Caco-2 (cell line): ENCODE measurements at regions of chr10 and their contacts with region 1.

Region 1: DNA sequence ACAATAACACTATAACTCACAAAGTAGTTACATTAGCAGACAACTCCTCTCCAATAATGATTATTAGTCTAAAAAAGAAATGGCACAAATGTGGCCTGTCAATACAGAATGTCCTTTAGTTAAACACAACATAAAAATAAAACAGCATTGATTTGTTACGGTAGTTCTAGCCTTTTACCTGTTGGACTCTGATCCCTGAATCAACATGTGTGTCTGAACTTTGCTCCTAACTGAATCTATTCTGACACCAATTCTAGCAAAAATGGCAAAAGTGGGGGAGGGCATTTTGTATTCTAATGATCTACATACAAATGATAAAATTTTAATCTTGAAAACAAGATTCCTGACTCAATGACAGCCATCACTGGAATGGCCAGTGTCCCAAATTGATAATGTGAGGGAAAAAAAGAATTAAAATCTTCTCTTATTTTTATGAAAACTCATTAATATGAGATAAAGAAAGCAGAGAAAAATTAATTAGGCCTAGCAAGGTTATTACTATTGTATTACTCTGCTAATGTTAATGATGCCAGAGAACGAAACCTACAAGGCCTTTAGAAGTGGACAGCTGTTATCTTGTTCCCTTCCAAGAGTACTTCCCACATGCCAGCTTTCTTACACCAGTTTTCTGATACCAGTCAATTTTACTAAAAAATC is 30.2 kb downstream of the FRA10AC1 start:
- DNase-seq: no peak
- H3K4me3 ChIP-seq: no peak overlapping the region
- H3K4me3 Mint-ChIP-seq: no peak overlapping the region
- H3K27ac Mint-ChIP-seq: no peak overlapping the region
- H3K4me1 ChIP-seq: peaks cover 32% of the 10 kb centered on the region
- H3K4me1 Mint-ChIP-seq: peaks cover 5% of the 10 kb centered on the region
- H3K27me3 ChIP-seq: no peaks in the 10 kb centered on the region
- H3K27me3 Mint-ChIP-seq: no peaks in the 10 kb centered on the region
- CTCF ChIP-seq: no peak

Region 2: GRCh38 chr10:93496322-93497041 is 175.7 kb before region 1 on chr10 and contains the start of gene CEP55:
- CTCF ChIA-PET with region 1: no interaction called
- POLR2A ChIA-PET with region 1: no interaction called
- intact Hi-C with region 1: loop called (anchors 5 kb)
- DNase-seq: peak; percentile 96 to 98
- H3K4me3 ChIP-seq: peak within 1 kb of the TSS; percentile 93
- H3K4me3 Mint-ChIP-seq: peak within 1 kb of the TSS; percentile 96
- H3K27ac Mint-ChIP-seq: peak within 1 kb of the TSS; percentile 95
- H3K4me1 ChIP-seq: peaks cover 30% of the 10 kb centered on the region
- H3K4me1 Mint-ChIP-seq: peaks cover 37% of the 10 kb centered on the region
- H3K27me3 ChIP-seq: no peaks in the 10 kb centered on the region
- H3K27me3 Mint-ChIP-seq: no peaks in the 10 kb centered on the region
- CTCF ChIP-seq: no peak
- total RNA-seq, gene CEP55: 64.5 and 65.3 TPM in 2 replicates

Region 3: GRCh38 chr10:93591065-93591808 is 80.9 kb before region 1 on chr10:
- CTCF ChIA-PET with region 1: no interaction called
- POLR2A ChIA-PET with region 1: no interaction called
- intact Hi-C with region 1: loop called (anchors 10 kb)
- DNase-seq: peak in 1 of 2 experiments; percentile 23
- H3K4me3 ChIP-seq: no peak overlapping the region
- H3K4me3 Mint-ChIP-seq: peak overlapping the region; percentile 11
- H3K27ac Mint-ChIP-seq: peak overlapping the region; percentile 67
- H3K4me1 ChIP-seq: peaks cover 21% of the 10 kb centered on the region
- H3K4me1 Mint-ChIP-seq: peaks cover 15% of the 10 kb centered on the region
- H3K27me3 ChIP-seq: no peaks in the 10 kb centered on the region
- H3K27me3 Mint-ChIP-seq: no peaks in the 10 kb centered on the region
- CTCF ChIP-seq: no peak